ENCODE measurements at regions of chr12 and their contacts with region 1.

Region 1: GRCh38 chr12:6688999-6689882 is at the start of gene ZNF384:
- DNase-seq: peak; percentile 99
- ATAC-seq: peak; percentile 88
- H3K4me3 ChIP-seq: peak within 1 kb of the TSS; percentile 88 to 99 (median 89)
- H3K27ac ChIP-seq: peak within 1 kb of the TSS; percentile 98
- H3K4me1 ChIP-seq: peaks cover 51% of the 10 kb centered on the region
- H3K27me3 ChIP-seq: peaks cover 0 to 3% of the 10 kb centered on the region in 2 experiments; a peak in 3 of 5 replicates
- CTCF ChIP-seq: peak; percentile 31
- EP300 ChIP-seq: peak in 1 of 2 experiments; percentile 46; a peak in 2 of 4 replicates
- POLR2A ChIP-seq: peak; percentile 57 to 76
- RAD21 ChIP-seq: no peak
- total RNA-seq, gene ZNF384: 23.6 and 24.1 TPM in 2 replicates

Region 2: DNA sequence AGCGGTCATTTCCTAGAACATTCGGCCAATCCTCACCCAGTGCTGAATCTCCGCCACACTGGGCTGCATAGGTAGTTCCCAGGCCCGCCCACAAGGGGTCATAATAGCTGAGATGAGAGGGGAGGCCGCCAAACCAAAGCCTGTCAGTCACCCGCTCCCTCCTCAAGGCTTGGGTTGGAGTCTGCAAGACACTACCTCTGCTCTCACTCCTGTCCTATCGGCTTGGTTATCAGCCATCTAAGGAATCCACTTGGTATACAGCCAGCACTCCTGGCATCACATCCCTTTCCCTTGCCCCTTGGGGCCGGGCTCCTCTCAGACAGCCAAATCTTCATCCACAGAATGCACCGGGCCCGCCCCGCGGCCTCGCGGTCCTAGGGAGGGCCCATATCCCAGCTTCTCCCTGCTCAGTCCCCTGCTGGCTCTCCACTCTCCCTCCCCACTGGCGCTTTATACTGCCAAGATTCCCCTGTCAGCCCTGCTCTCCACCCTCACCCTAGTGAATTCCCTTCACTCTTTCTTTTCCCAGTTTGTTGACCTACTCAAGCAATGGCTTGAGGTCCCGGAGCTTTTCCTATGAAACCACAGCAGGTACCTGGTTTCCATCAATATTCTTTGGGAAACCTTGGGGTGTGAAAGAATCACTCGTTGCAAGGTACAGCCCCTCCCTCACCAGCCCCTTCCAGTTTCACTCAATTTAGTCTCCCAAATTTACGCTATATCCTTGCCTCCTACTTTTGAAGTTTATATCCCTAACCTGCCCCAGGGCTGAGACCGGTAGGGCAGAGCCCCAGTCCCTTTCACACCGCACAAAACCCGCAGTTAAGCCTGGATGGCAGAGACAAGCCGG is 134.8 kb before region 1 on chr12:
- CTCF ChIA-PET with region 1: no interaction called
- POLR2A ChIA-PET with region 1: no interaction called
- in situ Hi-C with region 1: no loop called
- intact Hi-C with region 1: loop called (anchors 5 kb)
- DNase-seq: peak; percentile 77
- ATAC-seq: peak; percentile 72
- H3K4me3 ChIP-seq: peak overlapping the region; percentile 77 to 95 (median 92)
- H3K27ac ChIP-seq: peak overlapping the region; percentile 42
- H3K4me1 ChIP-seq: peaks cover 43% of the 10 kb centered on the region
- H3K27me3 ChIP-seq: no peaks in the 10 kb centered on the region; a peak in 1 of 5 replicates
- CTCF ChIP-seq: peak; percentile 86
- EP300 ChIP-seq: no peak
- POLR2A ChIP-seq: 0 out of 4 replicates have a peak, but pooled peaks of 1 of the 2 experiments have one; percentile 25
- RAD21 ChIP-seq: peak; percentile 38; the same call in 1 of the 2 replicates

Region 3: GRCh38 chr12:6607751-6608591 is 81.3 kb before region 1 on chr12:
- CTCF ChIA-PET with region 1: no interaction called
- POLR2A ChIA-PET with region 1: interaction called, 30 read pairs
- in situ Hi-C with region 1: no loop called
- intact Hi-C with region 1: no loop called
- DNase-seq: peak; percentile 56
- ATAC-seq: peak; percentile 17
- H3K4me3 ChIP-seq: no peak overlapping the region
- H3K27ac ChIP-seq: no peak overlapping the region
- H3K4me1 ChIP-seq: peaks cover 58% of the 10 kb centered on the region
- H3K27me3 ChIP-seq: no peaks in the 10 kb centered on the region; a peak in 1 of 5 replicates
- CTCF ChIP-seq: no peak
- EP300 ChIP-seq: no peak
- POLR2A ChIP-seq: no peak
- RAD21 ChIP-seq: no peak

Region 4: DNA sequence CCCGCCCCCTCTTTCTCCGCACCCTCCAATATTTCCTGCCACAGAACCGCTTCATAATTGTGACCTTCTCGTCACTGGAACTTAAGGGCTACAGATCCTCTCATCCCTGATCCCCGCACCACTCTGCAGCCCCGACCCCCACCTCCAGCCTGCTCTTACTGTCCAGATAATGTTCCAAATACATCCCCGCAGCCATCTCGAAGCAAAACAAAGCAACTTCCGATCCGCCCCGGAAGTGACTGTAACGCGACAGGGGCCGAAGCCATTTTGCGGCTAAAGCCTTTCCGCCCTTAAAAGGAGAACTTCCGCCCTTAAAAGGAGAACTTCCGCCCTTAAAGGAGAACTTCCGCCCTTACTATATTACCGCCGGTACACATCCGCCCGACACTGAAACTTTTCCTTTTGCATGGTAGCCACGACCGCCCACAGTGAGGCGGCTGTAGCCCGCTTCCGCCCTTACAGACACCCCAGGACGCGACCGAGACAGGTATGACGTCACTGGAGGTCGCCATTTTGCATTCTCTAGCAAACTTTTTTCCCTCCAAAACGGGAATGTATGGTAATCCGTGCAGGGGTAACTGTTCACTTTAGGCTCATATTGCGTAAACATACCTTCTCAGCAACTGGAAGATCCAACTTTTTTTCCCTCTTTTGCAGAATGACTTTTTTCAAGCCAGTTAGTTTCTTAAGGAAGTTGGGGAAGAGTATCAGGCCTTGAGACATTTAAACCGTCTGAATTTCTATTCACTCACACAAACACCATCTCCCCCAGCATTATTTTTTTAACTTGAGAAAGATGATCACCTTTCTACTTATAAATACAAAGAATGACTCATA is 26.1 kb before region 1 on chr12 and contains the start of gene ING4:
- CTCF ChIA-PET with region 1: no interaction called
- POLR2A ChIA-PET with region 1: interaction called, 19 read pairs
- in situ Hi-C with region 1: no loop called
- intact Hi-C with region 1: loop called (anchors 1 kb)
- DNase-seq: peak; percentile 99
- ATAC-seq: peak; percentile 99
- H3K4me3 ChIP-seq: peak within 1 kb of the TSS; percentile 77 to 92 (median 87)
- H3K27ac ChIP-seq: peak within 1 kb of the TSS; percentile 72
- H3K4me1 ChIP-seq: peaks cover 18% of the 10 kb centered on the region
- H3K27me3 ChIP-seq: no peaks in the 10 kb centered on the region; a peak in 1 of 5 replicates
- CTCF ChIP-seq: no peak
- EP300 ChIP-seq: peak in 1 of 2 experiments; percentile 39; a peak in 2 of 4 replicates
- POLR2A ChIP-seq: peak; percentile 42 to 52; a peak in 3 of 4 replicates
- RAD21 ChIP-seq: 0 out of 2 replicates have a peak, but pooled peaks have one; percentile 12
- total RNA-seq, gene ING4: 12.7 and 14.4 TPM in 2 replicates

Region 5: GRCh38 chr12:6723607-6724396 is 34.6 kb after region 1 on chr12 and contains the start of gene COPS7A:
- CTCF ChIA-PET with region 1: no interaction called
- POLR2A ChIA-PET with region 1: interaction called, 111 read pairs
- in situ Hi-C with region 1: no loop called
- intact Hi-C with region 1: loop called (anchors 2 kb)
- DNase-seq: peak; percentile 97
- ATAC-seq: peak; percentile 97
- H3K4me3 ChIP-seq: peak within 1 kb of the TSS; percentile 65 to 93 (median 74)
- H3K27ac ChIP-seq: peak within 1 kb of the TSS; percentile 82
- H3K4me1 ChIP-seq: peaks cover 31% of the 10 kb centered on the region
- H3K27me3 ChIP-seq: no peaks in the 10 kb centered on the region
- CTCF ChIP-seq: peak; percentile 66
- EP300 ChIP-seq: peak in 1 of 2 experiments; percentile 58; a peak in 1 of 4 replicates
- POLR2A ChIP-seq: peak; percentile 68 to 85
- RAD21 ChIP-seq: peak; percentile 36; the same call in 1 of the 2 replicates
- total RNA-seq, gene COPS7A: 38.0 and 40.0 TPM in 2 replicates

Measured in HepG2 (cell line).